Right cardiac atrium (tissue), 5 donors: ENCODE measurements at regions of chr6 and their contacts with region 1.

Region 1: GRCh38 chr6:16704401-16705045 is 56.7 kb downstream of the ATXN1 start:
- DNase-seq: peak in 1 of 3 donors; percentile 28
- ATAC-seq: peak; percentile 28 to 53
- H3K4me3 ChIP-seq: peak overlapping the region; percentile 11
- H3K27ac ChIP-seq: no peak overlapping the region
- H3K4me1 ChIP-seq: peaks cover 9% of the 10 kb centered on the region
- H3K27me3 ChIP-seq: no peaks in the 10 kb centered on the region

Region 2: DNA sequence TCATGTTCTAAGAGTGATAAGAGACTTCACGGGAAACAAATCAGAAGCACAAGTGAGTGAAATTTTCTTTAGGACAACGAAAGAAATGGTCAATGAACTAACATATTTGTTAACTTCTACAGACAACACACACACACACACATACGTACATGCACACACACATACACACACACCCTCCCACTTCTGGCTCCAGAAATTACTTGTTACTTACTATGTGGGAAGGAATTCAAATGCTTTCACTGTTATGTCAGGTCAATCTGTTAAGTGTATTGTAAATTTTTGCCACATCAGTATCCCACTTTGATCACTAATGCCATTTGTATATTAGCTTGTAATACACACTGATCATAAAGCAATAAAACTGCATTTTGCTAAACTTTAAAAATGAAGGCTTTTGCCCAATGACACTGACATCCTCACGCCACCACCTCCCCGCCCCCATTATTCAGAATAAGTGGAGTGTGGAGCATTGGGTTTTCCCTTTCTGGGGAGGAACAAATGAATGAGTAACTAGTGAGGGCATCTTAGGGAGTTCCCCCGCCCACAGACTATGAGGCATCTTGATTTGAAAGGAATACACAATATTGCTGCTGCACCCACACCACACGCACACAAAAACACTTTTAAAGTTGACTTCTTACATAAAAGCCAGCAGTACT is 19.5 kb before region 1 on chr6:
- intact Hi-C with region 1: loop called in 1 of 4 experiments (anchors 2 kb)
- DNase-seq: peak in 1 of 3 donors; percentile 21
- ATAC-seq: no peak
- H3K4me3 ChIP-seq: no peak overlapping the region
- H3K27ac ChIP-seq: no peak overlapping the region
- H3K4me1 ChIP-seq: peaks cover 7% of the 10 kb centered on the region
- H3K27me3 ChIP-seq: no peaks in the 10 kb centered on the region

Region 3: DNA sequence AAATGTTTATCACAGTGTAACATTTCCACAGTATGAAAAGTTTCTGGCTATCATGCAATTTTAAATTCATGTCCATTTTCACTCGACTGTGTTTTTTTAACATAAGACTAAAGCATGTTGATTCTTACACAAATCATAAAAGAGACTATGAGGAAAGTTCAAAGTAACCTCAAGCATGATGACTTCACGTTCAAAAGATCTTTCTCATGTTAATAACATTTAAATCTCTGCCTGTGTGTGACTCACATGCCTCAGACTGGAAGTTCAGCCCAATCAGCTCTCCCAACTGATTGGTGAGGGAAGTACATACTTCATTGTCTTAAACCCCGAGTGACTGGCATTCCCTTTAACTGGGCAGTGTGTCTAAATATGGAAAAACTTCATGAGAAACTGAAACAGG is 19.3 kb after region 1 on chr6:
- intact Hi-C with region 1: no loop called
- DNase-seq: no peak
- ATAC-seq: peak; percentile 62 to 73
- H3K4me3 ChIP-seq: no peak overlapping the region
- H3K27ac ChIP-seq: no peak overlapping the region
- H3K4me1 ChIP-seq: peaks cover 10% of the 10 kb centered on the region
- H3K27me3 ChIP-seq: no peaks in the 10 kb centered on the region